ENCODE measurements at regions of chr19 and their contacts with region 1.

Region 1: GRCh38 chr19:29678161-29679106 is 13.2 kb downstream of the PLEKHF1 start:
- DNase-seq: peak; percentile 69 to 90 (median 87)
- ATAC-seq: peak; percentile 66 to 78 (median 74)
- H3K4me3 ChIP-seq: no peak overlapping the region
- H3K27ac ChIP-seq: peak overlapping the region; percentile 66 to 96 (median 86)
- H3K4me1 ChIP-seq: peaks cover 7 to 92% (median 64%) of the 10 kb centered on the region in 12 donors
- H3K27me3 ChIP-seq: no peaks in the 10 kb centered on the region
- CTCF ChIP-seq: no peak
- POLR2A ChIP-seq: no peak

Region 2: GRCh38 chr19:29162694-29163093 is 515.7 kb before region 1 on chr19:
- intact Hi-C with region 1: no loop called
- DNase-seq: no peak
- ATAC-seq: no peak
- H3K4me3 ChIP-seq: no peak overlapping the region
- H3K27ac ChIP-seq: no peak overlapping the region
- H3K4me1 ChIP-seq: no peaks in the 10 kb centered on the region
- H3K27me3 ChIP-seq: peaks cover 0 to 6% (median 0%) of the 10 kb centered on the region in 9 donors
- CTCF ChIP-seq: no peak
- POLR2A ChIP-seq: no peak

Region 3: DNA sequence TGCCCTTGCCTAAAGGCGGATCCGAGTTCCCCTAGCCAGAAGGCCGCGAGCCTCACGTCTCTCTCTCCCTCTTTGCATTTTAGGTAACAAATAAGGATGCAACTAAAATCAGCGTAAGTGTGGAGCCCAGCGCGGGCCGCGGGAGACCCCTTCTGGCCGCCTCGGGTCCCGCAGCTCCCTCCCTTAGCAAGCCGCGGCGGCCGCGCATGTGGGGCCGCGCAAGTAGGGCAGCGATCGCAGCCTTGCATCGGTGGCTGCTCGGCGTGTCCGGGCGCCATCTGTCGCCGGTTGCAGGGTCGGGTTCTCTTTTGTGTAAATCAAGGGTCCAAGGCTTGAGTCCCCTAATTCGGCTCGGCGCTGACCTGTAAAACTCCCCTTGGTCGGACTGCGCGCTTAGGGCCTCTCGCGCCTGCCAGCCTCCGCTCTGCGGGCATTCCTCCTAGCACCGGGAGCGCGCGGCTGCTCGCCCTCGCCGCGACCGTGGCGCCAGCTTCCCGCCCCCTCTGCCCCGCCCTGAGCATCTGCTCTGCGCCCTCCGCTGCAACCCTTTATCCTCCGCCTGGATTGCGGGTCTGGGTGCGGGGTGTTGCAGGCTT is 150.0 kb before region 1 on chr19:
- intact Hi-C with region 1: no loop called
- DNase-seq: peak; percentile 23 to 79 (median 51)
- ATAC-seq: peak in 3 of 4 donors; percentile 64 to 86 (median 82)
- H3K4me3 ChIP-seq: peak overlapping the region in 10 of 12 donors; percentile 16 to 43 (median 32)
- H3K27ac ChIP-seq: no peak overlapping the region
- H3K4me1 ChIP-seq: peaks cover 0 to 63% (median 26%) of the 10 kb centered on the region in 12 donors
- H3K27me3 ChIP-seq: peaks cover 71 to 98% (median 85%) of the 10 kb centered on the region in 9 donors
- CTCF ChIP-seq: peak; percentile 56 to 91 (median 70)
- POLR2A ChIP-seq: no peak

Region 4: DNA sequence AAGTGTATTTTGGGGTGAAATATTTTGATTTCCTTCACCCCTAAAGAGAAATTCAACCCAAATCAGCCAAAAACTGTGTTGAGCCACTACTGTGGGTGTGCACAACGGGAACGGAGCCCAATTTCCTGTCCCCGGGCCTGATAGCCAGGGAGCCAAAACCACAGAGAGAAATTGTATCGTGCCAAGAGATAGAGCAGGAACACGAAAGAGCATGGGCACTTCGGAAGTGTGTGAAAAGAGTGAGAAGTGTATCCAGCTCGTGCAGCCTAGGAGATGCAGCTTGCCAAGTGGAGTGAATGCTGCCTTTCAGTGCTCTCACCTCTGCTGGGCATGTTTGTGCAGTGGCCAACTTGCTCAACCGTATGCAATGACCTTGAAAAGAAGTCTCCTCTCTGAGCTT is 32.5 kb before region 1 on chr19:
- intact Hi-C with region 1: loop called in 1 of 10 experiments (anchors 1 kb)
- DNase-seq: peak; percentile 55 to 79 (median 60)
- ATAC-seq: peak; percentile 89 to 96 (median 95)
- H3K4me3 ChIP-seq: no peak overlapping the region
- H3K27ac ChIP-seq: peak overlapping the region in 10 of 12 donors; percentile 28 to 79 (median 66)
- H3K4me1 ChIP-seq: peaks cover 3 to 23% (median 14%) of the 10 kb centered on the region in 12 donors
- H3K27me3 ChIP-seq: no peaks in the 10 kb centered on the region
- CTCF ChIP-seq: no peak
- POLR2A ChIP-seq: no peak

Region 5: DNA sequence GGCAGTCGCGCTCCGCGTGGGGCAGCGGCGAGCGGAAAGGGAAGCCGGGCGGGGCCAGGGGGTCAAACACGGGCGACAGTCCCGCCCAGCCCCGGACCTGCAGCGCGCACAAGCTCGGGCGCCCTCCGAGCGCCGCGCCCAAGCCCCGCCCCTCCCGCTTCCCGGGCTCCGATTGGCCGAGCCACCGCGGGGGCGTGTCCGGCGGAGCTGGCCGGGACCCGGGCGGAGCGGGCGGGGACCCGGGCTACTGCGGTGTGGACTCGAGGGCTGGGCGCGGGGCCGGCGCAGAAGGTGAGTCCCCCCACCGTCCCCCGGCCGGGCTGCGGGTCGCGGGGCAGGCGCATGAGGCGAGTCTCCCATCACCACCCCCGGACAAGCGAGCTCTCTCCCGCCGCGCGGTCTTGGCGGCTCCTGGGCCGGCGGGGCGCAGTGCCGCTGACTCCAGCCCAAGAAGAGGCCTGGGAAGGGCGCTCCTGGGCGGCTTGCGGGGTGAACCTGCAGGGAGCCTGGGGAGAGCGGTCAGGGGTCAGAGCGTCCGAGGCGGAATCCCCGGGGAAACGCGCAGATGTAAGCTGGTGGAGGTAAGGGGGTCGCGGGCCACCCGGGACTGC is 13.1 kb before region 1 on chr19 and contains the start of gene PLEKHF1:
- intact Hi-C with region 1: loop called in 1 of 10 experiments (anchors 2 kb)
- DNase-seq: peak; percentile 93 to 96 (median 94)
- ATAC-seq: peak; percentile 48 to 87 (median 84)
- H3K4me3 ChIP-seq: peak within 1 kb of the TSS; percentile 55 to 98 (median 92)
- H3K27ac ChIP-seq: peak within 1 kb of the TSS; percentile 80 to 98 (median 93)
- H3K4me1 ChIP-seq: peaks cover 14 to 71% (median 55%) of the 10 kb centered on the region in 12 donors
- H3K27me3 ChIP-seq: no peaks in the 10 kb centered on the region
- CTCF ChIP-seq: peak in 2 of 12 donors; percentile 17 to 23
- POLR2A ChIP-seq: peak; percentile 74 to 92
- total RNA-seq, gene PLEKHF1: 7.8 to 46.1 (median 17.5) TPM